Endothelial cell of umbilical vein (primary cell): ENCODE measurements at regions of chr4 and their contacts with region 1.

Region 1: DNA sequence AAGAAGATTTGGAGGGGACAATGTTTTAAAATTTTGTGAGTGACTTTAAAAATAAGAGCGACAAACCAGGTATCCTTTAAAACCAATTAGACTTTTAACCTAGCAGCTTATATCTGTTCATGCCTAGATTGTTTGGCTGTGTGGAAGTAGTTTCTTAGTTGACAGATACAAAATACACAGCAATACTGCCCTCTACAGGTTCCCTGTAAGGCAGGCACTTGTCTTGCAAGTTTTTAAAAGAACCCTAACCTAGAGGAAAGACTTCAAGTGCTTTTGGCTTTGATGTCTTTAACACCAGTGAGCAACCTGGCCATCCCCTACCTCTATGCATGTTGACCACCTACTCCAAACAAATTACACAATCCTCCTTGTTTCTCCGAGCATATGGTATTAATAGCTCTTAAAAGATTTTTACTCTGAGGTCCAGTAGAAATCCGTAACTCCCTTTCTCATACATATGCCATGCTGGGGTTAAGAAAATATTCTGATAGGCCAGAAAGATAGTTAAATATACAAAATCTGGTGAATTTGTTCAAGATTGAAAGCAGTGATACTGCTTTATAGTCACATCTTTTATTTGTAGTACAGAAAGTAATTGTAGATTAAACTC is 273.0 kb downstream of the ARHGAP24 start:
- DNase-seq: peak; percentile 76
- H3K4me3 ChIP-seq: no peak overlapping the region
- H3K27ac ChIP-seq: no peak overlapping the region
- H3K4me1 ChIP-seq: peaks cover 9% of the 10 kb centered on the region
- H3K27me3 ChIP-seq: no peaks in the 10 kb centered on the region
- CTCF ChIP-seq: peak; percentile 71 to 72
- POLR2A ChIP-seq: no peak

Region 2: GRCh38 chr4:85084380-85085094 is 663.5 kb before region 1 on chr4:
- CTCF ChIA-PET with region 1: interaction called, 93 read pairs
- POLR2A ChIA-PET with region 1: no interaction called
- dilution Hi-C with region 1: no loop called
- intact Hi-C with region 1: loop called (anchors 1 kb)
- DNase-seq: peak; percentile 67
- H3K4me3 ChIP-seq: no peak overlapping the region
- H3K27ac ChIP-seq: no peak overlapping the region
- H3K4me1 ChIP-seq: no peaks in the 10 kb centered on the region
- H3K27me3 ChIP-seq: peaks cover 4 to 11% of the 10 kb centered on the region in 2 experiments
- CTCF ChIP-seq: peak; percentile 43 to 47
- POLR2A ChIP-seq: no peak

Region 3: DNA sequence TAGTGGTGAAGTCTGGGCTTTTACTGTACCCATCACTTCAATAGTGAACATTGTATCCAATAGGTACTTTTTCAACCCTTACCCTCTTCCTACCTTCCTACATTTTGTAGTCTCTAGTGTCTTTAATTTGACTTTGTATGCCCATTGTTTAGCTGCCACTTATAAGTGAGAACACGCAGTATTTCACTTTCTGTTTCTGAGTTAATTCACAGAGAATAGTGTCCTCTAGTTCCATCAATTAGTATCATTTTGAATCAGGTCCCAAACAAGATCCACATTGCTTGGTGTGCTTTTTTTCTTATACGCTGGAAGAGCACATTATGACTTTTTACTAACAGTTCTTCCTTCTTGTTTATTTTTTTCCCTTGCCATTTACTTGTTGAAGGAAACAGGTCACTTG is 605.5 kb before region 1 on chr4:
- CTCF ChIA-PET with region 1: interaction called, 93 read pairs
- POLR2A ChIA-PET with region 1: no interaction called
- dilution Hi-C with region 1: no loop called
- intact Hi-C with region 1: loop called (anchors 1 kb)
- DNase-seq: no peak
- H3K4me3 ChIP-seq: no peak overlapping the region
- H3K27ac ChIP-seq: no peak overlapping the region
- H3K4me1 ChIP-seq: no peaks in the 10 kb centered on the region
- H3K27me3 ChIP-seq: peaks cover 9 to 35% of the 10 kb centered on the region in 2 experiments
- CTCF ChIP-seq: no peak
- POLR2A ChIP-seq: no peak

Region 4: DNA sequence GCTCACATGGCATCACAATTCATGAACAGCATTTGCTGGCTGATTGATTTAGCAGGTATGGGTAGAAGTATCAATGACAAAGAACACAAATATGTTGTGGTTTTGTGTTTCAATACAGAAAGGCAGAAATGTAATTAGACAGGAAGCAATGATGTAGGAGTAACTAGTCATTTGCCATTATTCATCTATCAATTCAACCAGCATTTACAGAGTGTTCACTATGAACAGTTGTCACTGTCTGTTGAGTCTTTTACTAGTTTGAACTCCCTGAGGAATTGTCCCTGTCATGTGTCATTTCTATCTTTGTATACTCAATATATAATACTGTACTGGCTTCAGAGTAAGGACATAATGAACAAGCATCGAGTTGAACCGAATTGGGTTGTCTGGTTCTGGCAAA is 324.6 kb before region 1 on chr4:
- CTCF ChIA-PET with region 1: interaction called, 4 read pairs
- POLR2A ChIA-PET with region 1: no interaction called
- dilution Hi-C with region 1: no loop called
- intact Hi-C with region 1: loop called (anchors 1 kb)
- DNase-seq: no peak
- H3K4me3 ChIP-seq: no peak overlapping the region
- H3K27ac ChIP-seq: no peak overlapping the region
- H3K4me1 ChIP-seq: no peaks in the 10 kb centered on the region
- H3K27me3 ChIP-seq: no peaks in the 10 kb centered on the region
- CTCF ChIP-seq: no peak
- POLR2A ChIP-seq: no peak

Region 5: DNA sequence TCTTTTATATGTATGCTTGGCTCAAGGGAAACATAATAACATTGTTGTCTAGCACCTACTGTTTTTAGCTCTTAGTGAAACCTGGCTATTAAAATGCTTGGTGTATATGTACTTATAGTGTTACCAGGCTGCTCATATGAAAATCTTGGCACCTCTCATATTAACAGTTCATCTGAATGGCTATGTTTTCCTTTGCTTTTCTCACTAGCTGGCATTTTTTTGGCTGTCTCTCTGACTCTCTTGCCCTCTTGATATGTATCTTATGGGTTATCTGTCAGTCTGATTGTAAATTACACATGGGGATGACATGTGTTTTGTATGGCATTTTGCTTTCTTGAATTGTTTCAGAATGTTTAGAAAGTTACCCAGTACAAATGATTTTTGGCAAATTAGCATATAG is 115.0 kb before region 1 on chr4:
- CTCF ChIA-PET with region 1: no interaction called
- POLR2A ChIA-PET with region 1: no interaction called
- dilution Hi-C with region 1: no loop called
- intact Hi-C with region 1: no loop called
- DNase-seq: no peak
- H3K4me3 ChIP-seq: no peak overlapping the region
- H3K27ac ChIP-seq: no peak overlapping the region
- H3K4me1 ChIP-seq: no peaks in the 10 kb centered on the region
- H3K27me3 ChIP-seq: peaks cover 8 to 21% of the 10 kb centered on the region in 2 experiments
- CTCF ChIP-seq: no peak
- POLR2A ChIP-seq: no peak

Region 6: DNA sequence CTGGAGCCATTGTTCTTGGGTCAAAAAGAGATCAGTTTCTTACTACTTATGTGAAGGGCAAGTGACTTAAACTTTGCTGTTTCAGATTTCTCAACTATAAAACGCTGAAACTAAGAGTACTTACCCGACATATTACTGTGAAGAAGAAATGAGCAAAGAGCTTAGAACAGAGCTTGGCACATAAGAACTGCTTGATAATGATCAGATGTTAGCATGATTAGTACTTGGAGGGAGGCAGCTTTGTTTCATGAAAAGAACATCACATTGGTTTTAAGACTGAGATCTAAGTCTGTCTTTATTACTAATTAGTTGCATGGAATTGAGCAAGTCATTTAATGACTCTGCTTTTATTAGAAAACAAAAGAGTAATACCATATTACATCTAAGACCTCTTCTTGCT is 103.9 kb before region 1 on chr4:
- CTCF ChIA-PET with region 1: no interaction called
- POLR2A ChIA-PET with region 1: no interaction called
- dilution Hi-C with region 1: no loop called
- intact Hi-C with region 1: no loop called
- DNase-seq: no peak
- H3K4me3 ChIP-seq: no peak overlapping the region
- H3K27ac ChIP-seq: no peak overlapping the region
- H3K4me1 ChIP-seq: no peaks in the 10 kb centered on the region
- H3K27me3 ChIP-seq: peaks cover 3 to 8% of the 10 kb centered on the region in 2 experiments
- CTCF ChIP-seq: no peak
- POLR2A ChIP-seq: no peak

Region 7: GRCh38 chr4:85717351-85717750 is 30.6 kb before region 1 on chr4:
- CTCF ChIA-PET with region 1: interaction called, 13 read pairs
- POLR2A ChIA-PET with region 1: no interaction called
- dilution Hi-C with region 1: no loop called
- intact Hi-C with region 1: no loop called
- DNase-seq: no peak
- H3K4me3 ChIP-seq: no peak overlapping the region
- H3K27ac ChIP-seq: no peak overlapping the region
- H3K4me1 ChIP-seq: no peaks in the 10 kb centered on the region
- H3K27me3 ChIP-seq: no peaks in the 10 kb centered on the region
- CTCF ChIP-seq: no peak
- POLR2A ChIP-seq: no peak

Region 8: GRCh38 chr4:85761803-85762528 is 14.0 kb after region 1 on chr4:
- CTCF ChIA-PET with region 1: interaction called, 11 read pairs
- POLR2A ChIA-PET with region 1: no interaction called
- dilution Hi-C with region 1: no loop called
- intact Hi-C with region 1: no loop called
- DNase-seq: peak; percentile 99
- H3K4me3 ChIP-seq: peak overlapping the region in 2 of 3 experiments; percentile 21 to 60
- H3K27ac ChIP-seq: peak overlapping the region; percentile 90
- H3K4me1 ChIP-seq: peaks cover 53% of the 10 kb centered on the region
- H3K27me3 ChIP-seq: no peaks in the 10 kb centered on the region
- CTCF ChIP-seq: no peak
- POLR2A ChIP-seq: no peak

Region 9: DNA sequence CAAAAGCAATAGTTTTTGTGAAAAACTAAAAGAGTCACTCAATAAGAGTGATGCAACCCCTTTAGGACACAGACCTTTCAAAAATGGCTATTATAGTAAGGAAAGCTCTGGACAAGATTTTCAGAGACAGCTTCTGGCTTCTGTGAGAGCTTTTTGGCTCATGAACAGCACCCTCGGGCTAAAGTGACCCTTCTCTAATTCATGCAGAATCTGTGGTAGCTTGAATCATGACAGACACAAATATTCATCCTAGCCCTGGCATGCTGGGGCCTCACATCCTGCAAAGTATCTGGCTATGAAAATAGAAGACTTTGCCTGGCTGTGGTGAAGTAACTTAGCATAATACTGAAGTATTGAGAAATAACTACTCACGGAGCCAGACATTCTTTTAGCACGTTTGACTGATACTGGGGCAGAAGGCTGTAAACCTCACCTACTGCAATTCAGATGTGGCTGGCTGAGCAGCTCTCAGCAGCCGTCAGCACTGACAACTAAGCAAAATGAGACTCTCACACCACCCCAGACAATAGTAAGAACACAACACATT is 284.6 kb after region 1 on chr4:
- CTCF ChIA-PET with region 1: interaction called, 10 read pairs
- POLR2A ChIA-PET with region 1: no interaction called
- dilution Hi-C with region 1: no loop called
- intact Hi-C with region 1: no loop called
- DNase-seq: no peak
- H3K4me3 ChIP-seq: no peak overlapping the region
- H3K27ac ChIP-seq: peak overlapping the region; percentile 50
- H3K4me1 ChIP-seq: peaks cover 40% of the 10 kb centered on the region
- H3K27me3 ChIP-seq: no peaks in the 10 kb centered on the region
- CTCF ChIP-seq: no peak
- POLR2A ChIP-seq: no peak